ENCODE measurements at regions of chr5 and their contacts with region 1.

Region 1: GRCh38 chr5:102296178-102296817 is at the start of gene SLCO4C1:
- DNase-seq: peak; percentile 71 to 82 (median 80)
- H3K4me3 ChIP-seq: peak within 1 kb of the TSS; percentile 61 to 95 (median 91)
- H3K4me3 Mint-ChIP-seq: peak within 1 kb of the TSS; percentile 91 to 97
- H3K27ac ChIP-seq: peak within 1 kb of the TSS; percentile 62 to 79
- H3K27ac Mint-ChIP-seq: peak within 1 kb of the TSS; percentile 78 to 95 (median 91)
- H3K4me1 ChIP-seq: peaks cover 37 to 52% of the 10 kb centered on the region in 2 donors
- H3K4me1 Mint-ChIP-seq: peaks cover 45% of the 10 kb centered on the region
- H3K27me3 ChIP-seq: no peaks in the 10 kb centered on the region
- H3K27me3 Mint-ChIP-seq: peaks cover 0 to 2% (median 1%) of the 10 kb centered on the region in 3 donors
- CTCF ChIP-seq: peak; percentile 77
- polyA plus RNA-seq, gene SLCO4C1: 1.8 to 3.9 (median 2.4) TPM

Region 2: GRCh38 chr5:101995585-101995984 is 300.7 kb before region 1 on chr5:
- intact Hi-C with region 1: loop called in 1 of 2 experiments (anchors 5 kb)
- DNase-seq: no peak
- H3K4me3 ChIP-seq: no peak overlapping the region
- H3K4me3 Mint-ChIP-seq: no peak overlapping the region
- H3K27ac ChIP-seq: no peak overlapping the region
- H3K27ac Mint-ChIP-seq: no peak overlapping the region
- H3K4me1 ChIP-seq: no peaks in the 10 kb centered on the region
- H3K4me1 Mint-ChIP-seq: no peaks in the 10 kb centered on the region
- H3K27me3 ChIP-seq: no peaks in the 10 kb centered on the region
- H3K27me3 Mint-ChIP-seq: peaks cover 0 to 2% (median 0%) of the 10 kb centered on the region in 3 donors
- CTCF ChIP-seq: no peak

Region 3: DNA sequence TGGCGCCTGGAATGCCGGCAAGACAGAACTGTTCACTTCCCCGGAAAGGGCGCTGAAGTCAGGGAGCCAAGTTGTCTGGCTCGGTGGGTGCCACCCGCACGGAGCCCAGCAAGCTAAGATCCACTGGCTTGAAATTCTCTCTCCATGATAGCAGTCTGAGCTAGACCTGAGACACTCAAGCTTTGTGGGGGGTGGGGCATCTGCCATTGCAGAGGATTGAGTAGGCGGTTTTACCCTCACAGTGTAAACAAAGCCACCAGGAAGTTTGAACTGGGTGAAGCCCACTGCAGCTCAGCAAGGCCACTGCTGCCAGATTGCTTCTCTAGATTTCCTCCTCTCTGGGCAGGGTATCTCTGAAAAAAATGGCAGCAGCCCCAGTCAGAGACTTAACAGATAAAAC is 277.6 kb before region 1 on chr5:
- intact Hi-C with region 1: no loop called
- DNase-seq: no peak
- H3K4me3 ChIP-seq: no peak overlapping the region
- H3K4me3 Mint-ChIP-seq: no peak overlapping the region
- H3K27ac ChIP-seq: no peak overlapping the region
- H3K27ac Mint-ChIP-seq: no peak overlapping the region
- H3K4me1 ChIP-seq: no peaks in the 10 kb centered on the region
- H3K4me1 Mint-ChIP-seq: no peaks in the 10 kb centered on the region
- H3K27me3 ChIP-seq: no peaks in the 10 kb centered on the region
- H3K27me3 Mint-ChIP-seq: no peaks in the 10 kb centered on the region
- CTCF ChIP-seq: no peak

Region 4: DNA sequence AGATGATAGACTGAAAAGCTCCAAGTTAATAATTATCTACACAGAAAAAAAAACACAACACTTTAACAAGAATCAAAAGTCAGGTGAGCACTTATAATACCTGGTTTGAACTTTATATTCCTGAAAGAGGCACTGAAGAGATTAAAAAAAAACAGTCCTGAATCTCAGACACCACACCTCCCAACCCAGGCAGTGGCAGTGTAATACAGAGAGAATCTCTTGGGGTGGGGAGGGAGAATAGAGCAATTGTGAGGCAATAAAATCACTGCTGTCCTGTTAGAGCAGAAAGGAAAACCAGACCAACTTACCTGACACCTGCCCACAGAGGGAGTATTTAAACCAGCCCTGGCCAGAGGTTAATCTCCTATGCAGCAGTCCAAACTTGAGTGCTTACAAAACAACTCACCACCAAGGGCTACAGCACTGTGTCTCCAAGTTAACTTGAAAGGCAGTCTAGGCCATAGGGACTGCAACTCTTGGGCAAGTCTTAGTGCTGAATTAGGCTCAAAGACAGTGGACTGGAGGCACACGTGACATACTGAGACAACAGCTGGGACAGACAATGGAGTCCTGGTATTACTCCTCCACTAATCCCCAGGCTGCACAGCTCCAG is 54.4 kb before region 1 on chr5:
- intact Hi-C with region 1: loop called in 1 of 2 experiments (anchors 10 kb)
- DNase-seq: no peak
- H3K4me3 ChIP-seq: no peak overlapping the region
- H3K4me3 Mint-ChIP-seq: no peak overlapping the region
- H3K27ac ChIP-seq: peak overlapping the region in 1 of 2 donors; percentile 40
- H3K27ac Mint-ChIP-seq: peak overlapping the region in 5 of 7 donors; percentile 6 to 77 (median 49)
- H3K4me1 ChIP-seq: no peaks in the 10 kb centered on the region
- H3K4me1 Mint-ChIP-seq: no peaks in the 10 kb centered on the region
- H3K27me3 ChIP-seq: no peaks in the 10 kb centered on the region
- H3K27me3 Mint-ChIP-seq: peaks cover 0 to 2% (median 0%) of the 10 kb centered on the region in 3 donors
- CTCF ChIP-seq: no peak

Measured in CD14-positive monocyte (primary cell).